Activated CD4-positive, alpha-beta memory T cell treated with anti-CD3 and anti-CD28 coated beads, Interleukin-2, amount 10 ng/mL, durations not matched to agents 7 days and 5 days (primary cell): ENCODE measurements at regions of chr10 and their contacts with region 1.

Region 1: DNA sequence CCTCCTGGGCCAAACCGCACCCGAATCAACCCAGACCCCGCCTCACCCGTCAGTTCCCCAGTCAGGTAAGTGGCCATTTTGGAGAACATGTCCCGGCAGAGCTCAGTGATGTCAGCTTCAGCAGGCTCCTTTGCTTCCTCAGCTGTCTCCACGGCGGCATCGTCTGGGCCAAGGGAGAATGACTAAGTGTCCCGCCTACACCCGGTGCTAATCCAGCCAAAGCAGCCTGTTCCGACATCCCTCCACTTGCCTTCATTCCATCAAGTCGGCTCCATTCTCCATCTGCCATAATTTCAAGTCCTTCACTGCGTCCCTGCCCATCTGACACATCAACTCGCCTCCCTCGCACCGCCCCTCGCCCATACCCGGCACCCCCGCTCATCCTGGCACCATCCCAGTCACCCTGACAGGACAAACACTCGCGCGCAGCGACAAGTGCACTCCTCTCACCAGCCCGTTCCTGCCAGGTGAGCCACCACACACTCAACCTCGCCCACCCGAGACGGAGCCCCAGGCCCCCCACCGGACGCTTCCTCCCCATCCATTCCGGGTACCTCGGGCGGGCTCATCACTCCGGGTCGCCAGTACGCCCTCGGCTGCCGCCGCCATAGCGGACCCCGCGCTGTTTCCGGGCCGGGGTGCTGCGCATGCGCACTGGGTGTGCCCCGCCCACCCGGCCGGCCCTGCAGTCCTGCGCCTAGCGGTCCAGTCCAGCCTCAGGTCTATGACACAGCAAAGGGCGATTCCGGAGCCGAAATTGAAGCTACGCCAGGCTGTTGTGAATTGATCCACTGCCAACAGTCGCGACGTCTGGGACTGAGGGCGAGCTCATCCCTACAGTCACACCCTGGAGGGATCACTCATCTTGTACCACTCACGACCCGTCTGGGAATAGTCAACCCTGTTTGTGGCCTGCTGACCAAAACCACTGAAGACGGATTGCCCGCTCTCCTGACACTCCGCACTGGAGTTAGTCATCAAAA is at the start of gene BLOC1S2:
- DNase-seq: peak; percentile 88
- H3K4me3 Mint-ChIP-seq: peak within 1 kb of the TSS; percentile 100
- H3K27ac Mint-ChIP-seq: peak within 1 kb of the TSS; percentile 98
- H3K4me1 Mint-ChIP-seq: peaks cover 29% of the 10 kb centered on the region
- H3K27me3 Mint-ChIP-seq: no peaks in the 10 kb centered on the region
- total RNA-seq, gene BLOC1S2: 47.5 to 48.8 TPM

Region 2: GRCh38 chr10:100216006-100216405 is 70.3 kb before region 1 on chr10:
- CTCF ChIA-PET with region 1: no interaction called
- POLR2A ChIA-PET with region 1: no interaction called
- DNase-seq: no peak
- H3K4me3 Mint-ChIP-seq: no peak overlapping the region
- H3K27ac Mint-ChIP-seq: no peak overlapping the region
- H3K4me1 Mint-ChIP-seq: no peaks in the 10 kb centered on the region
- H3K27me3 Mint-ChIP-seq: no peaks in the 10 kb centered on the region

Region 3: GRCh38 chr10:100267237-100268104 is 18.9 kb before region 1 on chr10 and contains the start of gene CWF19L1:
- CTCF ChIA-PET with region 1: interaction called, 4 read pairs
- POLR2A ChIA-PET with region 1: interaction called, 15 read pairs
- DNase-seq: peak; percentile 82
- H3K4me3 Mint-ChIP-seq: peak within 1 kb of the TSS; percentile 100
- H3K27ac Mint-ChIP-seq: peak within 1 kb of the TSS; percentile 98
- H3K4me1 Mint-ChIP-seq: peaks cover 19% of the 10 kb centered on the region
- H3K27me3 Mint-ChIP-seq: no peaks in the 10 kb centered on the region
- total RNA-seq, gene CWF19L1: 36.0 to 36.7 TPM

Region 4: GRCh38 chr10:100297242-100297641 is 10.9 kb after region 1 on chr10:
- CTCF ChIA-PET with region 1: no interaction called
- POLR2A ChIA-PET with region 1: interaction called, 10 read pairs
- DNase-seq: no peak
- H3K4me3 Mint-ChIP-seq: no peak overlapping the region
- H3K27ac Mint-ChIP-seq: no peak overlapping the region
- H3K4me1 Mint-ChIP-seq: no peaks in the 10 kb centered on the region
- H3K27me3 Mint-ChIP-seq: peaks cover 41% of the 10 kb centered on the region